B cell (primary cell): ENCODE measurements at regions of chr3 and their contacts with region 1.

Region 1: GRCh38 chr3:50568947-50569749 is at the start of gene HEMK1:
- DNase-seq: peak; percentile 96
- ATAC-seq: peak; percentile 77
- H3K4me3 ChIP-seq: peak within 1 kb of the TSS; percentile 69 to 93 (median 80)
- H3K4me3 Mint-ChIP-seq: peak within 1 kb of the TSS; percentile 98
- H3K27ac ChIP-seq: peak within 1 kb of the TSS; percentile 77 to 82
- H3K27ac Mint-ChIP-seq: peak within 1 kb of the TSS; percentile 96
- H3K4me1 ChIP-seq: peaks cover 16 to 39% of the 10 kb centered on the region in 2 donors
- H3K4me1 Mint-ChIP-seq: peaks cover 35% of the 10 kb centered on the region
- H3K27me3 ChIP-seq: no peaks in the 10 kb centered on the region
- H3K27me3 Mint-ChIP-seq: no peaks in the 10 kb centered on the region
- CTCF ChIP-seq: no peak
- total RNA-seq, gene HEMK1: 43.0 and 43.5 TPM in 2 replicates

Region 2: GRCh38 chr3:50350527-50351322 is 218.4 kb before region 1 on chr3 and contains the starts of genes CYB561D2 and NPRL2:
- CTCF ChIA-PET with region 1: interaction called, 6 read pairs
- POLR2A ChIA-PET with region 1: interaction called, 11 read pairs
- intact Hi-C with region 1: no loop called
- DNase-seq: peak; percentile 98
- ATAC-seq: peak; percentile 87
- H3K4me3 ChIP-seq: peak within 1 kb of the TSS; percentile 71 to 98 (median 91)
- H3K4me3 Mint-ChIP-seq: peak within 1 kb of the TSS; percentile 99
- H3K27ac ChIP-seq: peak within 1 kb of the TSS; percentile 85 to 93
- H3K27ac Mint-ChIP-seq: peak within 1 kb of the TSS; percentile 100
- H3K4me1 ChIP-seq: peaks cover 25 to 41% of the 10 kb centered on the region in 2 donors
- H3K4me1 Mint-ChIP-seq: peaks cover 52% of the 10 kb centered on the region
- H3K27me3 ChIP-seq: no peaks in the 10 kb centered on the region
- H3K27me3 Mint-ChIP-seq: no peaks in the 10 kb centered on the region
- CTCF ChIP-seq: no peak
- total RNA-seq, gene CYB561D2: 36.1 and 39.5 TPM in 2 replicates
- total RNA-seq, gene NPRL2: 29.6 and 31.3 TPM in 2 replicates

Region 3: GRCh38 chr3:50365080-50365841 is 203.9 kb before region 1 on chr3:
- CTCF ChIA-PET with region 1: no interaction called
- POLR2A ChIA-PET with region 1: interaction called, 6 read pairs
- intact Hi-C with region 1: loop called (anchors 1 kb)
- DNase-seq: peak; percentile 95
- ATAC-seq: peak; percentile 97
- H3K4me3 ChIP-seq: peak overlapping the region; percentile 24 to 84 (median 81)
- H3K4me3 Mint-ChIP-seq: peak overlapping the region; percentile 91
- H3K27ac ChIP-seq: peak overlapping the region; percentile 78 to 86
- H3K27ac Mint-ChIP-seq: peak overlapping the region; percentile 94
- H3K4me1 ChIP-seq: peaks cover 13 to 22% of the 10 kb centered on the region in 2 donors
- H3K4me1 Mint-ChIP-seq: peaks cover 21% of the 10 kb centered on the region
- H3K27me3 ChIP-seq: peaks cover 0 to 3% (median 0%) of the 10 kb centered on the region in 4 experiments
- H3K27me3 Mint-ChIP-seq: peaks cover 4% of the 10 kb centered on the region
- CTCF ChIP-seq: no peak

Region 4: GRCh38 chr3:50587806-50588758 is 18.9 kb after region 1 on chr3:
- CTCF ChIA-PET with region 1: interaction called, 116 read pairs
- POLR2A ChIA-PET with region 1: interaction called, 17 read pairs
- intact Hi-C with region 1: loop called (anchors 1 kb)
- DNase-seq: no peak
- ATAC-seq: no peak
- H3K4me3 ChIP-seq: no peak overlapping the region
- H3K4me3 Mint-ChIP-seq: no peak overlapping the region
- H3K27ac ChIP-seq: no peak overlapping the region
- H3K27ac Mint-ChIP-seq: peak overlapping the region; percentile 67
- H3K4me1 ChIP-seq: peaks cover 18 to 43% of the 10 kb centered on the region in 2 donors
- H3K4me1 Mint-ChIP-seq: peaks cover 29% of the 10 kb centered on the region
- H3K27me3 ChIP-seq: no peaks in the 10 kb centered on the region
- H3K27me3 Mint-ChIP-seq: no peaks in the 10 kb centered on the region
- CTCF ChIP-seq: no peak

Region 5: GRCh38 chr3:51384726-51385473 is 815.8 kb after region 1 on chr3 and contains the start of gene MANF:
- CTCF ChIA-PET with region 1: interaction called, 5 read pairs
- POLR2A ChIA-PET with region 1: interaction called, 10 read pairs
- intact Hi-C with region 1: loop called (anchors 1 kb)
- DNase-seq: peak; percentile 98
- ATAC-seq: peak; percentile 95
- H3K4me3 ChIP-seq: peak within 1 kb of the TSS; percentile 74 to 97 (median 87)
- H3K4me3 Mint-ChIP-seq: peak within 1 kb of the TSS; percentile 99
- H3K27ac ChIP-seq: peak within 1 kb of the TSS; percentile 82 to 95
- H3K27ac Mint-ChIP-seq: peak within 1 kb of the TSS; percentile 99
- H3K4me1 ChIP-seq: peaks cover 21 to 33% of the 10 kb centered on the region in 2 donors
- H3K4me1 Mint-ChIP-seq: peaks cover 42% of the 10 kb centered on the region
- H3K27me3 ChIP-seq: no peaks in the 10 kb centered on the region
- H3K27me3 Mint-ChIP-seq: no peaks in the 10 kb centered on the region
- CTCF ChIP-seq: no peak
- total RNA-seq, gene MANF: 28.4 and 29.7 TPM in 2 replicates